ENCODE measurements at regions of chr2 and their contacts with region 1.

Region 1: DNA sequence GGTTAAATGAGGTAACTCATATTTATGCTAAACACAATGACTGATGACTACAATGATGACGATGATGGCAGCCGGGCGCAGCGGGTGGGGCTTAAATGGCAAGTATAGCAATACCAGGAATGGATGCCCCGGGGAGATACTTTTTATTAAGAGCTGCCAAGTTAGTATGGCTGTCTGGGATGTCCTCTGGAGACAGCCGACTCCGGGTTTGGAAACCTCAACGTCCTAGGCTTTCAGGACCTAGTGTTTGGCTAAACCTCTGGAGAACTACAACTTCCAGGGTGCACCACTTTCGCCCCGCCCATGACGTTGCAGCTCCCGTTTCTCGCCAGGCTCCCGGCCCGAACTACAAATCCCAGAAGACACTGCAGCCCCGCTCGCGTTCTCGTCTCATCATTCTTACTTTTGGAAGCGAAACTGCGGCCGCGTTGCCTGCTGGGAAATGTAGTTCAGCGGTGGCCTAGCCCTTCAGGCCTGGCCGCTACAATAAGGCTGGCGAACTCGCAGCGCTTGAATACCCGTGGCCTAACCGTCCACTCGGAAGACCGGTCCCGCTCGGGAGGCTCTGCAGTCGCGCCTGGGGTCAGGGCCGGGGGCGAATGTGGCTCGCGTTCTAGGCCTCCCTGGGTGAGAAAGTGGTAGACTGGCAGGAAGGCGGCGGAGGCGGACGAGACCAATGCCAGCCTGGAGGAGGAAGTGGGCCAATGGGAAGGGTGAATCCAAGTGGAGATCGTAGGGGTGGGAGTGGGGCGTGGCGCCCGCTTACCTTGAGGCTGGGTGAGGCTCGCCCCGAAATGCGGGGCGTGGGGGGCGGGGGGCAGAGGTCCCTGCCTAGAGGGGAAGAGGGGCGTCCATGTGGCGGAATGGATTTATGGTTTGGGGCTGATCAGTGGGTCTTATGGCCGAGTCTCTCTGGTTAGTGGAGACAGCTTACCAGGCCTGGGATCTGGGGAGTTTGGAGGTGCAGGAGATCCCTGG is at the start of gene SMARCAL1:
- DNase-seq: peak; percentile 97
- H3K4me3 Mint-ChIP-seq: peak within 1 kb of the TSS; percentile 99
- H3K27ac Mint-ChIP-seq: peak within 1 kb of the TSS; percentile 89
- H3K4me1 Mint-ChIP-seq: peaks cover 19% of the 10 kb centered on the region
- H3K27me3 Mint-ChIP-seq: no peaks in the 10 kb centered on the region
- total RNA-seq, gene SMARCAL1: 28.0 and 29.1 TPM in 2 replicates

Region 2: DNA sequence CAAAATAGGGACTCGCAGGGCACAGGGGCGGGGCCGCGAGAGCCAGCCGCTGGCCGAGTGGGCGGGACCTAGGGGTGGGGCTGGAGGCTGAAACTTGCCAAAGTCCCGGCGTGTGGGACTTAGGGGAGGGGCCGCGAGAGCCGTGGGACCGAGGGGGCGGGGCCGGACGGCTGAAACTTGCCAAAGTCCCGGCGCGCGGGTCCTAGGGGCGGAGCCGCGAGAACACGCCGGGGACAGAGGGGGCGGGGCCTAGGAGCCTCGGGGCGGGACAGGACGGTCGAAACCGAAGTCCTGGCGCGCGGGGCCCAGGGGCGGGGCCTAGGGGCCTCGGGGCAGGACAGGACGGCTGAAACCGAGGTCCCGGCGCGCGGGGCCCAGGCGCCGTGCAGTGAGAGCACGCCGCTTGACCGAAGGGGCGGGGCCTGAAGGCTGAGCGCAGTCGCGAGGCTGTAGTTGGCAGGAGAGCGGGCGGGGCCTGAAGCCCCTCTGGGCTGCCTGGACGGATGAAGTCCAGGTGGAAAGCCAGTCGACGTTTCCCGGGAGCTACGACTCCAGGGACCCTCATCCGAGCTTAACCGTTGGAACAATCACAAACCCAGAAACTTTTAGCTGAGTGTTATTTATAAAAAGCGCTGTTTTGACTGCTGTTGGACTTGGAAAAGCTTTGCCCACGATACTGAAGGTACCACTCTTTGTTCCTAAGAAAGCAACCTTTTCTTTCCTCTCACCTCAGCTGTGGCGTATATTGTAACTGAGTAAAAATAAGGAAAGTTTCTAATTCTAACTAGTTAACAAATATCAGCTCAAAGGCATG is 1602.4 kb before region 1 on chr2:
- intact Hi-C with region 1: loop called (anchors 1 kb)
- DNase-seq: peak; percentile 100
- H3K4me3 Mint-ChIP-seq: peak overlapping the region; percentile 92
- H3K27ac Mint-ChIP-seq: peak overlapping the region; percentile 30
- H3K4me1 Mint-ChIP-seq: peaks cover 45% of the 10 kb centered on the region
- H3K27me3 Mint-ChIP-seq: peaks cover 14% of the 10 kb centered on the region

Region 3: DNA sequence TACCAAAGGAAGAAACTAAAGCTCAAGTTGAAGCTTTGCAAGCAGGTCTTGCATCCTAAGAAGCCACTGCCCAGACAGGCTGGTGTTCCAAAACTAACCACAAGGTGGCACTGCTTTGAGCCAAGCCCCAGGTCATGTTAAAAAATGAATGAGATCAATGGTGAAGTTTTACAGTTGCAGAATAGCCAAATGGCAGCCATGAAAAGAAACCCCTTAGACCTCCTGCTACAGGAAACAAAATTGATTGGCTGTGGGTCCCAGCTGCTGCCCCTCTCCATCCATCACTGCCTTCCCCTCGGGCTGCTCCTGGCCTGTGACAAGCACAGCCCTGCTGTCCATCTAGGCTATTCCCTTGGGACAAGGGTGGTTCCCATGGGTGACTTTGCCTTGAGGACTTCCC is 378.2 kb before region 1 on chr2:
- intact Hi-C with region 1: loop called (anchors 1 kb)
- DNase-seq: peak; percentile 65
- H3K4me3 Mint-ChIP-seq: no peak overlapping the region
- H3K27ac Mint-ChIP-seq: peak overlapping the region; percentile 64
- H3K4me1 Mint-ChIP-seq: peaks cover 47% of the 10 kb centered on the region
- H3K27me3 Mint-ChIP-seq: no peaks in the 10 kb centered on the region

Region 4: GRCh38 chr2:216114714-216115557 is 297.4 kb before region 1 on chr2:
- intact Hi-C with region 1: loop called (anchors 1 kb)
- DNase-seq: peak; percentile 95
- H3K4me3 Mint-ChIP-seq: peak overlapping the region; percentile 89
- H3K27ac Mint-ChIP-seq: peak overlapping the region; percentile 88
- H3K4me1 Mint-ChIP-seq: peaks cover 94% of the 10 kb centered on the region
- H3K27me3 Mint-ChIP-seq: no peaks in the 10 kb centered on the region

Region 5: DNA sequence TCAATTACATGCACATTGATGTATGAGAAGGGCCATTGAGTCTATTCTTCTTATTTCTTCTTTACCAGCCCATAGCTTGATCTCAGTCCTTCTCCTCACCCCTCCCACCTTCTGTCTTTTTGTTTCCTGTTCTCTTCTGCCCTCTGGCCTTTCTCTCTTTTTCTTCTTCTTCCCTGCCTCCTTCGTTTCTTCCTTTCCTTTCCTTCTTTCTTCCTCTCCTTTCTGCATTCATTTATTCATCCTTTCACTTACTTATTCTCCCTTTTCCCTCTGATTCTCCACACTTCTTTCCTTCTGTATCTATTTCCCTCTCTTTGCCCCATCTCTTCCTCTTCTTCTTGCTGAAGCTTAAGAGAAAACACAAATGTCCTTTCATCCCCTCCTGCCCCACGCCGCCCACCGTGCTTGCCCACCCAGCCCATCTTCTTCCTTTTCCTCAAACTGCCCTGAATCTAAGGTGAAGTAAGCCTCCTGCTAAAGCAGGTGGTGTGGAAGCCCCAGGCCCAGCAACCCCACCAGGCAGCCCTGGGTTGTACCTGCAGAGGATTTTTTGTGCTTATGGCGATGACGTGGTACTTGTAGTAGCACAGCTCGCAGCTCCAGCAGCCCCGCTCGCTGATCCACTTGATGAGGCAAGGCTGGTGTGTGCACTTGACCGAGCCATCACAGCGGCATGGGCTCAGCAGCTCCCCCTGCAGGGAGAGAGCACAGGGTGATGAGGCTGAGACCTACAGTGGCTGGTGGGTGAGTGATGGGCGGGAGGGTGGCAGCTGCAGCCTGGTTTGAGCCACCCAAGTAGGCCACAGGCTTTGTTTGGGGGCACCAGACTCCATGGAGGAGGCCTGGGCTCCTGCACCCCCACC is 129.0 kb before region 1 on chr2:
- intact Hi-C with region 1: no loop called
- DNase-seq: no peak
- H3K4me3 Mint-ChIP-seq: no peak overlapping the region
- H3K27ac Mint-ChIP-seq: no peak overlapping the region
- H3K4me1 Mint-ChIP-seq: no peaks in the 10 kb centered on the region
- H3K27me3 Mint-ChIP-seq: no peaks in the 10 kb centered on the region

Region 6: GRCh38 chr2:216371756-216372702 is 40.3 kb before region 1 on chr2 and contains the start of gene MARCHF4:
- intact Hi-C with region 1: loop called (anchors 1 kb)
- DNase-seq: peak; percentile 51
- H3K4me3 Mint-ChIP-seq: no peak within 1 kb of the TSS
- H3K27ac Mint-ChIP-seq: no peak within 1 kb of the TSS
- H3K4me1 Mint-ChIP-seq: no peaks in the 10 kb centered on the region
- H3K27me3 Mint-ChIP-seq: peaks cover 47% of the 10 kb centered on the region
- total RNA-seq, gene MARCHF4: not detected in 2 replicates

Region 7: GRCh38 chr2:216436383-216436782 is 24.1 kb after region 1 on chr2:
- intact Hi-C with region 1: no loop called
- DNase-seq: no peak
- H3K4me3 Mint-ChIP-seq: no peak overlapping the region
- H3K27ac Mint-ChIP-seq: no peak overlapping the region
- H3K4me1 Mint-ChIP-seq: no peaks in the 10 kb centered on the region
- H3K27me3 Mint-ChIP-seq: no peaks in the 10 kb centered on the region

Region 8: GRCh38 chr2:216735086-216735485 is 322.8 kb after region 1 on chr2:
- intact Hi-C with region 1: no loop called
- DNase-seq: no peak
- H3K4me3 Mint-ChIP-seq: no peak overlapping the region
- H3K27ac Mint-ChIP-seq: no peak overlapping the region
- H3K4me1 Mint-ChIP-seq: no peaks in the 10 kb centered on the region
- H3K27me3 Mint-ChIP-seq: peaks cover 3% of the 10 kb centered on the region

Region 9: DNA sequence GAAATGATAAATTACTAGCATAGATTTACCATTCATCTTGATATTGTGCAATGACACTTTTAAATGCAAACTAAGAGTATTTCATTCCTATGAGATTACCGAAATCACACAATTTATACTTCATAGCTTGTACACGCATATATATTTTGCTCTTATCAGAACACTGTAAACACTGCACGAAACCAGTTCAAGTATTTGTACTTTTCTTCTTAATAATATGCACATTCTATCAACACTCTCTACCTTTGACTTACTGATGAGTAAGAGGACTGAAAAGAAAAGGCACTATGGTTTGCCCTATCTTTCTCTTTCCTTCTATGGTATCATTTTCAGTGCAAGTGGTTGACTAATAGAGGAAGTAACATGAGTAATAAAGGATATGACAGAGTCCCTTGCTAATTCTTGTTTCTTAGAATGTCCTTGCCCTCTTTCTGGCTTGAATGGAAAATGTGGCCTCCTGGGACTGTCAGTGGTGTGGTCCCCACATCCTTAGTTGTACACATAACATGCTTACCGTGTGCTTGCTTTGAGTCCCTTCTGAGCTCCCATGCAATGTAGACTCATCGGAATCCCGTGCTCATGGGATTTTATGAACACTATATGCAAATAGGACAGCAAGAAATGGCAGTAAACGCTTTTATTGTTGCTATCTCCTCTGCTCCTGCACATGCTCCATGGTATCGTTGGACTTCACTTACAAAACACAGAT is 811.1 kb after region 1 on chr2:
- intact Hi-C with region 1: loop called (anchors 2 kb)
- DNase-seq: peak; percentile 56
- H3K4me3 Mint-ChIP-seq: peak overlapping the region; percentile 9
- H3K27ac Mint-ChIP-seq: peak overlapping the region; percentile 93
- H3K4me1 Mint-ChIP-seq: peaks cover 49% of the 10 kb centered on the region
- H3K27me3 Mint-ChIP-seq: peaks cover 10% of the 10 kb centered on the region